ENCODE measurements at regions of chr15 and their contacts with region 1.

Region 1: GRCh38 chr15:27648359-27648758 is 450.8 kb downstream of the OCA2 start:
- DNase-seq: no peak
- H3K4me3 ChIP-seq: no peak overlapping the region
- H3K27ac ChIP-seq: no peak overlapping the region
- H3K4me1 ChIP-seq: no peaks in the 10 kb centered on the region
- H3K27me3 ChIP-seq: no peaks in the 10 kb centered on the region
- CTCF ChIP-seq: no peak
- EP300 ChIP-seq: no peak
- POLR2A ChIP-seq: no peak

Region 2: DNA sequence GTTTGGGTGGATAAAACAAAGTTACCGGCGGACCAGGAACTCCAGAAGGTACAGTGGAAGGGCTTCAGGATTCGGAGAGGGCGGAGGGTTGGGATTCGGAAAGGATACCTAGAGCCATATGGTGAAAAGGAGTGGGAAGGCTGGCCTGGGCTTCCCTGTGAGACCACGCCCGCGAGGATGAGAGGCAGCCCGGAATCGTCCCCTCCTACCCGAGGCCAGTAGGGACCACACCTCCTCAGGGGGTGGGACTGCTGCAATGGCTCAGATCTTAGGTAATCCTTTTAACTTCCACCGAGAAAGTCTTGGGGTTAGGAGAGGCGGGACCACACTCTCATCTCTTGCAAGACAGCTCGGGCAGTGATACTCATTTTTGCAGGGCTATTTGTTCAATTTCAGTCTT is 60.5 kb before region 1 on chr15:
- intact Hi-C with region 1: loop called (anchors 10 kb)
- DNase-seq: no peak
- H3K4me3 ChIP-seq: no peak overlapping the region
- H3K27ac ChIP-seq: no peak overlapping the region
- H3K4me1 ChIP-seq: no peaks in the 10 kb centered on the region
- H3K27me3 ChIP-seq: peaks cover 0 to 7% (median 0%) of the 10 kb centered on the region in 3 donors
- CTCF ChIP-seq: no peak
- EP300 ChIP-seq: no peak
- POLR2A ChIP-seq: no peak

Region 3: GRCh38 chr15:27768732-27769475 is 120.5 kb after region 1 on chr15:
- intact Hi-C with region 1: no loop called
- DNase-seq: no peak
- H3K4me3 ChIP-seq: no peak overlapping the region
- H3K27ac ChIP-seq: no peak overlapping the region
- H3K4me1 ChIP-seq: no peaks in the 10 kb centered on the region
- H3K27me3 ChIP-seq: no peaks in the 10 kb centered on the region
- CTCF ChIP-seq: no peak
- EP300 ChIP-seq: no peak
- POLR2A ChIP-seq: no peak

Region 4: GRCh38 chr15:27787931-27788330 is 139.6 kb after region 1 on chr15:
- intact Hi-C with region 1: no loop called
- DNase-seq: no peak
- H3K4me3 ChIP-seq: no peak overlapping the region
- H3K27ac ChIP-seq: no peak overlapping the region
- H3K4me1 ChIP-seq: no peaks in the 10 kb centered on the region
- H3K27me3 ChIP-seq: no peaks in the 10 kb centered on the region
- CTCF ChIP-seq: no peak
- EP300 ChIP-seq: no peak
- POLR2A ChIP-seq: no peak

Region 5: GRCh38 chr15:27873039-27873438 is 224.7 kb after region 1 on chr15:
- intact Hi-C with region 1: no loop called
- DNase-seq: no peak
- H3K4me3 ChIP-seq: no peak overlapping the region
- H3K27ac ChIP-seq: no peak overlapping the region
- H3K4me1 ChIP-seq: no peaks in the 10 kb centered on the region
- H3K27me3 ChIP-seq: no peaks in the 10 kb centered on the region
- CTCF ChIP-seq: no peak
- EP300 ChIP-seq: no peak
- POLR2A ChIP-seq: no peak

Measured in stomach (tissue), 19 donors.